Naive thymus-derived CD8-positive, alpha-beta T cell (primary cell): ENCODE measurements at regions of chr11 and their contacts with region 1.

Region 1: GRCh38 chr11:3006505-3007183 is 14.5 kb upstream of the NAP1L4 start:
- DNase-seq: peak; percentile 38 to 91 (median 72)
- ATAC-seq: peak; percentile 97 to 99
- H3K4me3 Mint-ChIP-seq: peak overlapping the region; percentile 84 to 93 (median 92)
- H3K27ac Mint-ChIP-seq: peak overlapping the region in 9 of 10 donors; percentile 63 to 95 (median 94)
- H3K4me1 Mint-ChIP-seq: peaks cover 23 to 87% (median 57%) of the 10 kb centered on the region in 4 donors
- H3K27me3 Mint-ChIP-seq: no peaks in the 10 kb centered on the region

Region 2: DNA sequence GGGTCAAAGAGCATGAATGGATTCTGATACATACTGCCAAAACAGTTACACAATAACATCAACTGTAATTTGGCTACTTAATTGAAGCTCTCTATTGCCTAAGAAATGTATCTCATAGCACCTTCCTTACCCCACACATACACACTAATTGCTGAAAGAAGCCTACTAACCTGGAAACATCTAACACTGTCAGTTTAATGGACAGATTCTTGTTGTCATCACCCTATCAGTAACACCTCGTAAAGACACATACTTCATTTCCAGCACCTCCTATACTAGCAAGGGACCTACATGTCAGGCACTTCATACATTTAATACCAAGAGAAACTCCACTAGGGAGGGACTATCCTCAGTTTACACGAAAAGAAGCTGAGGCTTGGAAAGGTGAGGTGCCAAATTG is 24.4 kb before region 1 on chr11:
- POLR2A ChIA-PET with region 1: interaction called, 457 read pairs
- DNase-seq: no peak
- ATAC-seq: no peak
- H3K4me3 Mint-ChIP-seq: peak overlapping the region in 8 of 10 donors; percentile 31 to 79 (median 74)
- H3K27ac Mint-ChIP-seq: peak overlapping the region; percentile 30 to 88 (median 78)
- H3K4me1 Mint-ChIP-seq: peaks cover 24 to 84% (median 67%) of the 10 kb centered on the region in 4 donors
- H3K27me3 Mint-ChIP-seq: no peaks in the 10 kb centered on the region

Region 3: GRCh38 chr11:3021125-3021524 is 14.5 kb after region 1 on chr11:
- POLR2A ChIA-PET with region 1: interaction called, 56 read pairs
- DNase-seq: peak; percentile 26 to 80 (median 56)
- ATAC-seq: peak; percentile 83
- H3K4me3 Mint-ChIP-seq: peak overlapping the region in 1 of 10 donors; percentile 10
- H3K27ac Mint-ChIP-seq: peak overlapping the region in 6 of 10 donors; percentile 41 to 73 (median 68)
- H3K4me1 Mint-ChIP-seq: peaks cover 23 to 68% (median 60%) of the 10 kb centered on the region in 4 donors
- H3K27me3 Mint-ChIP-seq: no peaks in the 10 kb centered on the region

Region 4: DNA sequence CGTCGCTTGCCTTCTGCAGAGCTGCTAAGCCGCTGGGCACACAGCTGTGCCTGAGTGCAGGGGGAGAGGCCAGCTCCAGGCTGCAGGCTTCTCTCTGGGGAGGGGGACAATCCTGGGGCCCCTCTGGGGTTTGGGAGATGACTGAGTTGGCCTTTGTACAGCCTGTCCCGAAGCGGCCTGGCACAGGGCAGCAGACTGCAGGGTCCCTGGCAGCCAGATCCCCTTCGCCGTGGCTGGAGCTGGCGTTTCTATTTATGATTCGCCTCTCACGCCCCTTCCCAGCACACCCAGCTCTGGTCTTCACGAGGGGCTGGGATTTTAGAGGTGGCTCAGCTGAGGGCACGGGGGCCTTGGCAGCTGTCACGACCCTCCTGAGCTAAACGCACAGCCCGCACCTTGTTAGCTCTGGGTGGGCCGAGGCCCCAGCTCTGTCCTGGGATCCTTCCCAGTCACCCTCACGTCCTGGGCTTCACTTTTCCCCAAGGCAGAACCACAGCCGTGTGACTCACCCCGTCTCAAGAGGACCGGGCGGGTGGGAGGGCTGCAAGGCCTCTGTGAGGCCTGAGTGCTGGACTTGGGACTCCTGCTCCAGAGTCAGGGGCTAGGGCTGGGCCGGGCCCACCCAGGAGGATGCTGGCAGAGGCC is 140.1 kb after region 1 on chr11:
- POLR2A ChIA-PET with region 1: no interaction called
- DNase-seq: no peak
- ATAC-seq: no peak
- H3K4me3 Mint-ChIP-seq: no peak overlapping the region
- H3K27ac Mint-ChIP-seq: peak overlapping the region in 2 of 10 donors; percentile 14 to 48
- H3K4me1 Mint-ChIP-seq: peaks cover 27 to 52% (median 35%) of the 10 kb centered on the region in 4 donors
- H3K27me3 Mint-ChIP-seq: no peaks in the 10 kb centered on the region